Posterior vena cava (tissue), 2 donors: ENCODE measurements at regions of chr9 and their contacts with region 1.

Region 1: DNA sequence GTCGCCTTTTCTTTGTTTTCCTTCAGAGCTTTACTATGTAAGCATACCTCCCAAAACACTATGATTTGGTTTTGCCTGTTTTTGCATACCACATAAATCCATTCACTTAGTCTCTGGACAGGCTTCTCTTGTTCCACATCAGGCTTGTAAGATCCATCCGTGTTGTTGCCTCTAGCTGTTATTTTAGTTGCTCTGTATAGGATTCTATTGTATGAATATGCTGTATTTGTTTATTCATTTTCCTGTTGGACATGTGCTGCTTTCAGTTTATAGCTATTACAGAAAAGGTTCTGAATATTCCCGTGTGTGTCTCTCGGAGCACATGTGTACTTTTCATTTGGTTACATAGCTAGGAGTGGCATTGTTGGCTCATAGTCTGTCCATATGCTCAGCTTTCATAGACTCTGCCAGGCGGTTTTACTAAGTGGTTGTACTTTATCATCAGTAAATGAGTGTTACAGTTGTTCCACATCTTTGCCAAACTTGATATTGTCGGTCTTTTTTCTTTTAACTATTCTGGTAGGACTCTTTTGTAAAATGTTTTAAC is 41.8 kb downstream of the NUP214 start:
- DNase-seq: no peak

Region 2: DNA sequence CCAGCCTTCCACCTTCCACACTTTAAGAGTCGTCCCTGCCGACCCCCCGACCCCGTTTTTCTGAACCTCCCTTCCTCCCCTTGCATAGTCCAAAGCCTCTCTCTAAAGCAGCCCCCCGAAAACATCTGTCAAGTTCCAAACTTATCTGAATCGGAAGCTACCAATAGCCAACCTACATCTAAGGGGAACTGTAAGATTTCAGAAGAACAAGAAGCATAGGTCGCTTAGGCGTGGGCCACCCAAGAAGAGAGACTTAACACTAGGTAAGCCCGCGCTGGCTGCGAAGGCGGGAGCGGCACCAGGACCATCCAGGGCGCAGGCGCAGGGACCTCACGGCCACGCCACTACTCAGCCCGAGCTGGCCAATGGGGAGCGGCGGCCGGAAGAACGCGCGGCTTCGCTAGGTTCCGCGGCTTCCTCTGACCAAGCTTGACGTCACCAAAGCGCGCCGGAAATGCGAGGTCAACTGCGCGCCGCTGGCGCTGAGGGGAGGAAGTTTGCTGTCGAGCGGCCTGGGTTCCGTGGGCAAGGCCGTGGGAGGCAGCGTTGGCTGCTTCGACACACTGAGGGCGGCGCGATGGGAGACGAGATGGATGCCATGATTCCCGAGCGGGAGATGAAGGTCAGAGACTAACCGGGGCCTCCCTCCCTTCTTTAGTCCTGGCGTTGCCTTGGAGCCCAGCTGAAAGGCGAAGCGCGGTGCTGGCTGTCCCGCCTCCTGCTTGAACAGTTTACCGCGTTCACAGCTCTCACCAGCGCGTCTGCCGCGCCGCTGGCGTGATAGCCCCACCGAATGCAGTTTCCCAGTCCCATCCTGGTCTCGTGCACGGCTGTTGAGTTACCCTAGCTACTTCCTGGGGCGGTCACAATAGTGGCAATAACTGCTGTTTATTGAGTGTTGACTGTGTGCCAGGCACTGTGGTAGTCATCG is 41.8 kb before region 1 on chr9 and contains the start of gene NUP214:
- intact Hi-C with region 1: loop called in 1 of 2 experiments (anchors 5 kb)
- DNase-seq: peak; percentile 100
- total RNA-seq, gene NUP214: 33.9 to 40.8 TPM

Region 3: DNA sequence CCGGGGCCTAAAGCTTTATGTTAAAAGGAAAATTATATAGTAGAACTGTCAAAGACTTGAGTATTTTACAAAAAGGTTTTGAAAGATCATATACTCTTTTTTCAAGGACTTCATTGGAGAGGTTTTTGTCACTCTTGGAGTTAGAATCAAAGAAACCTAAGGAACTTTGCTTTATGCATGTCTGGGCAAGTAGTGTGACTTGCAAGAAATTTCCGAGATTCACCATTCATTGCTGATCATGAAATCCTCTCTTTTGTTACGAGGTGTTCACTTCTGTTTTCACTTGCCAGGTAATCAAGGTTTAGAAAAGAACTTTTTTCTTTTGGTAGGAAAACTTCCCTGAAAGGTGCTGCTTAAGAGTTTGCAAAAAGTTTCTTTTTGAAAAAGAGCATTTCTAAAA is 23.0 kb after region 1 on chr9:
- intact Hi-C with region 1: loop called in 1 of 2 experiments (anchors 2 kb)
- DNase-seq: no peak